ENCODE measurements at regions of chr22 and their contacts with region 1.

Region 1: GRCh38 chr22:39520054-39520891 is at the start of gene ATF4:
- DNase-seq: peak; percentile 99
- H3K4me3 ChIP-seq: peak within 1 kb of the TSS; percentile 91 to 100 (median 96)
- H3K27ac ChIP-seq: peak within 1 kb of the TSS; percentile 99 to 100 (median 99)
- H3K4me1 ChIP-seq: peaks cover 52 to 57% (median 55%) of the 10 kb centered on the region in 4 donors
- H3K27me3 ChIP-seq: no peaks in the 10 kb centered on the region
- CTCF ChIP-seq: no peak
- EP300 ChIP-seq: no peak
- POLR2A ChIP-seq: peak; percentile 99
- total RNA-seq, gene ATF4: 516 to 895 (median 721) TPM

Region 2: DNA sequence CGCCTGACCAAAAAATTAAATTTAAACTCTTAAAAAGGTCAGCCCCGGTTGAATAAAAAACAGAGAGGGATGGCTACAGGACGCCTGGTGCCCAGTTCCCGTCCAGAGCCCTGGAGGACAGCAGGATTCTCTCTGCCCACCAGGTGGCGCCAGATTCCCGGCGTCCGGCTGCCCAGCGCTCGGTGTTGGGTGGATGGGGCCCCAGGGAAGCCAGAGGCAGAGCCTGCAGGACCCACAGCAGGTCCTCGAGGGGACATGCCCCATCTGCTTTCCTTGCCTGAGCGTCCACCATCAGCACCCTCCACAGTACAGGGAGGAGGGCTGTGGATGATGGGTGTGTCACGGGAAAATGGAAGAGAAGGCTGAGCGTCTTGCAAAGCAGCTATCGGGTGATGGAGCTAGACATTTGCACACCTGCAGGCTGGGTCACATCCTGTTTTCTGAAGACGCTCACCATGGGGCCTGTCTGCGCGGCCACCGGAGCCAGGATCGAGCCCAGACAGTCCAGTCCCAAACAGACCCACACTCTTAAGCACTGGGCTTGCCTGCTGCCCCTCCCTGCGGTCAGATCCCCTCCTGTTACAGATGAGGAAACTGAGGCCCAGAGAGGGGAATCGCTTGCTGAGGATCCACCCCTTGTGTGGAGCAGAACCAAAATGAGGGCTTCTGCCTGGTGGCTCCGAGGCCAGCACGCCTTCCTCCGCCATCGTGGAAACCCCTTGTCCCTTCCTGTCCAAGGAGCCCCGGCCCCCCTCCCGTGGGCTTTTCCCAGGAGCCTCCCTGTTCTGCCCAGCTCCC is 349.2 kb before region 1 on chr22:
- intact Hi-C with region 1: loop called (anchors 10 kb)
- DNase-seq: no peak
- H3K4me3 ChIP-seq: peak overlapping the region in 2 of 4 donors; percentile 12 to 28
- H3K27ac ChIP-seq: peak overlapping the region in 2 of 4 donors; percentile 6 to 44
- H3K4me1 ChIP-seq: peaks cover 52 to 57% (median 56%) of the 10 kb centered on the region in 4 donors
- H3K27me3 ChIP-seq: peaks cover 0 to 11% (median 0%) of the 10 kb centered on the region in 4 donors
- CTCF ChIP-seq: peak in 2 of 3 experiments; percentile 98
- EP300 ChIP-seq: no peak
- POLR2A ChIP-seq: no peak

Region 3: DNA sequence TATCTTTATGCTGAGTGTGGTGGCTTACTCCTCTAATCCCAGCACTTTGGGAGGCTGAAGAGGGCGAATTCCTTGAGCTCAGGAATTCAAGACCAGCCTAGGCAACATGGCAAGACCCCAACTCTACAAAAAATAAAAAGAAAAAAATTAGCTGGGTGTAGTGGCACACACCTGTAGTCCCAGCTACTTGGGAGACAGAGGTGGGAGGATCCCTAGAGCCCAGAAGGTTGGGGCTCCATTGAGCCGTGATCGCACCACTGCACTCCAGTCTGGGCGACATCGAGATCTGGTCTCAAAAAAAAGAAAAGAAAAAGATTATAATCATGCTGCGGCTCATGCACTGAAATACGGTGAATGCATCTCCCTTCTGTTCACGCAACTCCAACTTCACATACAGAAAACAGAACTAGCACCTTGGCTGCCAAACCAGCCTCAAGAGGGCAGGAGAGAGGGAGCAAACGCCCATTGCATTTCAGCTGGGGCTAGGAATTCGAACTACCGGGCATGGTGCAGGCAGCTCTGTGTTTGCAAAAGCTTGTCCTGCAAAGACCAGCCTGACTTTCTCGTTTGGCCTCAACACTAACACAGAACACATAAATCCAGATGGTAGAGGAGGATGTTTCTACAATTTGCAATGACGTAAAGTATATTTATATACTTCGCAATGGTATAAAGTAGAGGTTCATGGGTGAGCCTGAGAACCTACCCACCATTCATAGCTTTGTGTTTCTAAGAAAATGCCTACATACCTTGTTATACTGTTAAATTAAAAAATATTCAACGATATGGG is 176.8 kb before region 1 on chr22:
- intact Hi-C with region 1: loop called (anchors 10 kb)
- DNase-seq: no peak
- H3K4me3 ChIP-seq: no peak overlapping the region
- H3K27ac ChIP-seq: no peak overlapping the region
- H3K4me1 ChIP-seq: peaks cover 0 to 6% (median 5%) of the 10 kb centered on the region in 4 donors
- H3K27me3 ChIP-seq: no peaks in the 10 kb centered on the region
- CTCF ChIP-seq: peak; percentile 53 to 79 (median 55)
- EP300 ChIP-seq: no peak
- POLR2A ChIP-seq: no peak

Region 4: GRCh38 chr22:39405346-39406085 is 114.8 kb before region 1 on chr22:
- intact Hi-C with region 1: loop called (anchors 10 kb)
- DNase-seq: no peak
- H3K4me3 ChIP-seq: peak overlapping the region; percentile 12 to 42 (median 28)
- H3K27ac ChIP-seq: peak overlapping the region; percentile 28 to 63 (median 40)
- H3K4me1 ChIP-seq: peaks cover 22 to 66% (median 45%) of the 10 kb centered on the region in 4 donors
- H3K27me3 ChIP-seq: no peaks in the 10 kb centered on the region
- CTCF ChIP-seq: peak in 1 of 3 experiments; percentile 18
- EP300 ChIP-seq: no peak
- POLR2A ChIP-seq: no peak

Region 5: GRCh38 chr22:39439170-39439569 is 81.1 kb before region 1 on chr22:
- intact Hi-C with region 1: loop called (anchors 10 kb)
- DNase-seq: no peak
- H3K4me3 ChIP-seq: no peak overlapping the region
- H3K27ac ChIP-seq: no peak overlapping the region
- H3K4me1 ChIP-seq: peaks cover 13 to 25% (median 17%) of the 10 kb centered on the region in 4 donors
- H3K27me3 ChIP-seq: peaks cover 0 to 48% (median 8%) of the 10 kb centered on the region in 4 donors
- CTCF ChIP-seq: no peak
- EP300 ChIP-seq: no peak
- POLR2A ChIP-seq: no peak

Region 6: DNA sequence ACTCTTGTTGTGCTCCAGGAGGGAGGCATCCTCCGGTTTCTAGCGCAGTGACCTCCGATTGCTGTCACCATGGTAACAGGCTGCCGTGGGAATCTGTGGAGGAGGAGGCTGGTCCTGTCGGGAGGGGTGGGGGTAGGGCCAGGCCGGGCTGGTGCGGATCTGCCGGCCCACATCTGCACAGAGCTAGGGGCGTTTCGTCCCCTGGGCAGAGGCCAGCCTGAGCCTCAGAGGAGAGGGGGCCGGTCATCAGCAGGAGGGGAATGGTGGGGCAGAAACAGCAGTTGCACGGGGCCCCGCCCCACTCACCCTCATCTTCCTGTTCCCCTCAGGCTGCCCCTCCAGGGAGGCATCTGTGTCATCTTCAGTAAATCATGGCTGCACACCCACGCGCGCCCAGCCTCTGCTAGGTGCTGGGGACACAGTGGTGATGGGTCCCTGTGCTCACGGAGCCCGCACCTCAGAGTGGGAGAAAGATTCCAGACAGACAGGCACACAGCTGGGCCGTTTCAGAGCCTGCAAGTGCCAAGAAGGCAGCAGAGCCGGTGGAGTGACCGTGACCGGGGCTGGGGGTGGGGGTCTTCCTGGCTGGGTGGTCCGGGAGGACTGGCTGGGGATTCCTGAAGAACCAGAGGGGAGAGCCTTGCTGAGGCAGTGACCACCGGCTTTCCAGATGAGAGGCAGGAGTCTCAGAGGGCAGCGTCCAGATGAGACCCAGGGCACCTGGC is 170.8 kb after region 1 on chr22:
- intact Hi-C with region 1: no loop called
- DNase-seq: no peak
- H3K4me3 ChIP-seq: no peak overlapping the region
- H3K27ac ChIP-seq: no peak overlapping the region
- H3K4me1 ChIP-seq: peaks cover 0 to 9% (median 4%) of the 10 kb centered on the region in 4 donors
- H3K27me3 ChIP-seq: peaks cover 0 to 100% (median 10%) of the 10 kb centered on the region in 4 donors
- CTCF ChIP-seq: no peak
- EP300 ChIP-seq: no peak
- POLR2A ChIP-seq: no peak

Measured in esophagus muscularis mucosa (tissue), 4 donors.